ENCODE measurements at regions of chr2 and their contacts with region 1.

Region 1: GRCh38 chr2:88857951-88858411 is 166.5 kb downstream of the RPIA start:
- DNase-seq: no peak
- H3K4me3 ChIP-seq: no peak overlapping the region
- CTCF ChIP-seq: no peak

Region 2: DNA sequence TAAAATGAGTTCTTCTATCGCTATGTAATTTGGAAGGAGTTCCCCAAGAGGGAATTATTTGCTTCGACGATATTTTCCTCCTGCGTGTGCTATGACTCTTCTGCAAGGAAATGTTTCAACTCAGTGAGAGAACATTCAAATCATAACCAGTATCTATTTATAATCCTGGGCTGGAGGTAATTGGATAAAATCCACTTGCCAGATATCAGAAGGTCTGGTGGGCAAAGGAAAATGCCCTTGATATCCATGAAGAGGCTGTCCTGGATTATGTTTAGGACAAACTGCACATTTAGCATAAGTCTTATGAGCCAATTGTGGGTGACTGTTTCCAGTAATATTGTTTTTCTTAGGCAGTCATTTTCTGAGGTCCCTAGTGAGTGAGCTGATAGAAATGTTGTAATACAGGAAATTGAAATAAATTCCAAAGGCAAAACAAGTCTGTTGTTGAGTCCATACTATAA is 148.8 kb before region 1 on chr2:
- CTCF ChIA-PET with region 1: no interaction called
- POLR2A ChIA-PET with region 1: no interaction called
- DNase-seq: peak; percentile 7
- H3K4me3 ChIP-seq: no peak overlapping the region
- CTCF ChIP-seq: no peak

Region 3: DNA sequence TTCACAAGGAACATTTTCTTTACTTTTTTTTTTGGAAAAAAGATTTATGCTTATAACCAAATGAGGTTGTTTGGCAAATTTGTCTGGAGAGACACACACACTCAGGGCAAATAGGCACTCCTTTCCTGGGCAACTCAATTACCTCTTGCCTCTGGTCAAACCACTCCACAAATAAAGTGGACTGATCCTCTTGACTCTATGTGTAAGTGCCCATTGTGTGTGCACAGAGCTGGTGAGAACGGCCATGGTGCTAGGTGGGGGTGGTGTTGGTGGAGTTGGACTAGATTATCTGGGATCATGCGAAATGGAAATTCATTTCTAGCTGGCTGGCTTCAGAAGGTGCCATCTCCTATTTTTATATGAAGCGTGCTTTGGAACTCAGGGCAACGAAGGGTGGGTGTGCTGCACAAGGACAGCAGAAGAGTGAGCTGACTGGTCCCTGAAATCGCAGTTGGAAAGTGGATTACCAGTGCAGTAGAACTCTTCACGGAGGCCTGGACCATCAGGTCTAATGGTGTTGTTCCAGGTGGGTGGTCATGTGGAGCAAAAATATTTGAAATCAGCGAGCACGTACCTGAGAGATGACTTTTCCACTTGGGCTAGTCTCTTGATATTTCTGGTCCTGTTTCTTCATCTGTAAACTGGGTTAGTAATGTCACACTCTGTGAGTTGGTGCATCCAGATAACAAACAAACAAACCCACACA is 16.6 kb before region 1 on chr2:
- CTCF ChIA-PET with region 1: no interaction called
- POLR2A ChIA-PET with region 1: no interaction called
- DNase-seq: no peak
- H3K4me3 ChIP-seq: no peak overlapping the region
- CTCF ChIP-seq: no peak

Region 4: DNA sequence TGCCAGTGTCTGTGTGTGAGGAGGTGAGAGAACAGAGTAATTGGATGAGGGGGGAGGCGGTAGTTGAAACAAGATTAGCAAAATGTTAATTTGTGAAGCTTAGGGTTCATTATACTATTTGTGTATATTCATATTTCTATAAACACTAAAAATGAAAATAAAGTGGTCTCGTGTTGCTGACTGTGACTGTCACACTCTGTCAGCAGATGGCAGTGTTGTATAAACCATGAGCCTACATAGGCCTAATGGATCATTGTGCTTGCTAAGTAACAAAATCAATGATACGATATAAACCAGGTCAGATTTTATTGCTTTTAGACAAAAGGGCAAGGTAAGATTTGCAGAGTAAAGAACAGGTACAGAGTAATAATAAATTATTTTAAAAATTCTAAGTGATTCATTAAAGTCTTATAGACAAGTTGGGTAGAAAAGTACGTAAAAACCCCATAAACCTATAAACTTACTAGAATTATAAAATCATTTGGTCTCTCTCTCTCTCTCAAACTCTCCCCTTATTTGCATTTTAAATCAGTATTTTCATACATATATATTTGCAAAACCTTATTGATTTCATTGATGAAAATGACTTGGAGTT is 16.2 kb after region 1 on chr2:
- CTCF ChIA-PET with region 1: interaction called, 52 read pairs
- POLR2A ChIA-PET with region 1: no interaction called
- DNase-seq: no peak
- H3K4me3 ChIP-seq: no peak overlapping the region
- CTCF ChIP-seq: peak; percentile 56

Region 5: DNA sequence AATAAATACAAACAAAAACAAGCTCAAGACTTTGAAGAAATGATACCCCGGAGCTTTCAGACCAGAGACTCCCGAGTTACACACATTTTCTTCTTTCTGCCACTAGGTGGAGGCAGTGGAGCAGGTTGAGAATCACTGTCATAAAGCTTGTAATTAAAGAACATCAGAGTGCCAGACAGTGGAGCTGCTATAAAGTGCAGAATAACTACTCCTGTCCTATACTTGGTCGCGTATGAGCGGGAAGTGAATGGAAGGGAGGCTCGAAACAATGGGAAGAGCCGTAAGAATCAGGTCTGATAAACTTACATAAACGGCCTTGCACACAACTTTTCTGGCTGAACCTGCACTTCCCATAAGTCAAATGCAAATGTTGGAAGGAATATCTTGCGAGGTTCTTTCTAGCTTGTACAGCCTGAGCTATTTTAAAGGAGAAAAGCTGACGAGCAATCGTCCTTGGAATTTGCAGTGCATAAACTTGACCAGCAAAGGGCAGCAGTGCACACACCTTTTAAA is 22.5 kb after region 1 on chr2:
- CTCF ChIA-PET with region 1: interaction called, 52 read pairs
- POLR2A ChIA-PET with region 1: no interaction called
- DNase-seq: no peak
- H3K4me3 ChIP-seq: no peak overlapping the region
- CTCF ChIP-seq: peak; percentile 72

Region 6: GRCh38 chr2:88950010-88950409 is 92.0 kb after region 1 on chr2:
- CTCF ChIA-PET with region 1: no interaction called
- POLR2A ChIA-PET with region 1: no interaction called
- DNase-seq: no peak
- H3K4me3 ChIP-seq: no peak overlapping the region
- CTCF ChIP-seq: no peak